CD4-positive, alpha-beta memory T cell (primary cell): ENCODE measurements at regions of chr19 and their contacts with region 1.

Region 1: DNA sequence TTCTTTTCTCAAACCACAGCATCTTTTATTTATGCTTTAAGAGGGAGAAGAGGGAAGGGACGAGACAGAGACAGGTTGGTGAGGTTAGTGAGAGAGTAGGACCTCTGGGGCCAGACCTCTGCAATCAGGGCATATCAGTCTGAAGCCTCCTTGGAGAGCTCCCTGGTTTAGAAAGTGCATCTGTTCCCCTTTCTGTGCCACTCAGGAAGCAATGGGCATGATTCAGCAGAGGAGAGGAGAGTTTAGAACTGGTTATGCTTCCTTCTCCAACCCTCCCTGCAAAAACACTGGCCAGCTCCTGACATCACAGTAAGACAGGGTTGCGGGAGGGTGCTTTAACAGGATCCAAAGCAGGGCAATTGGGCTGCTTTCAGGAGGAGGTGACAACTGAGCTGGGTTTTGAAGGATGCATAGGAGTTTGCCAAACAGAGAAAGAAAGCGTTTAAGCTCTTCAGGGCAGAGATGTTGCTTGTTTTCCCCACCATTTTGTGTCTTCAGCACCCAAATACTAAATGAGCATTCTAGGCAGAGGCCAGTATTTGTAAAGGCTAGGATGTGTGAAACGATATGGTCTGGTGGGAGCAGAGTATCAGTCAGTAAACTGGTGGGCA is 33.1 kb downstream of the CERS4 start:
- DNase-seq: no peak
- H3K4me3 ChIP-seq: no peak overlapping the region
- H3K4me3 Mint-ChIP-seq: no peak overlapping the region
- H3K27ac ChIP-seq: no peak overlapping the region
- H3K27ac Mint-ChIP-seq: peak overlapping the region in 2 of 7 donors; percentile 31 to 55
- H3K4me1 ChIP-seq: peaks cover 14% of the 10 kb centered on the region
- H3K4me1 Mint-ChIP-seq: peaks cover 10 to 19% (median 13%) of the 10 kb centered on the region in 4 donors
- H3K27me3 ChIP-seq: no peaks in the 10 kb centered on the region
- H3K27me3 Mint-ChIP-seq: no peaks in the 10 kb centered on the region

Region 2: DNA sequence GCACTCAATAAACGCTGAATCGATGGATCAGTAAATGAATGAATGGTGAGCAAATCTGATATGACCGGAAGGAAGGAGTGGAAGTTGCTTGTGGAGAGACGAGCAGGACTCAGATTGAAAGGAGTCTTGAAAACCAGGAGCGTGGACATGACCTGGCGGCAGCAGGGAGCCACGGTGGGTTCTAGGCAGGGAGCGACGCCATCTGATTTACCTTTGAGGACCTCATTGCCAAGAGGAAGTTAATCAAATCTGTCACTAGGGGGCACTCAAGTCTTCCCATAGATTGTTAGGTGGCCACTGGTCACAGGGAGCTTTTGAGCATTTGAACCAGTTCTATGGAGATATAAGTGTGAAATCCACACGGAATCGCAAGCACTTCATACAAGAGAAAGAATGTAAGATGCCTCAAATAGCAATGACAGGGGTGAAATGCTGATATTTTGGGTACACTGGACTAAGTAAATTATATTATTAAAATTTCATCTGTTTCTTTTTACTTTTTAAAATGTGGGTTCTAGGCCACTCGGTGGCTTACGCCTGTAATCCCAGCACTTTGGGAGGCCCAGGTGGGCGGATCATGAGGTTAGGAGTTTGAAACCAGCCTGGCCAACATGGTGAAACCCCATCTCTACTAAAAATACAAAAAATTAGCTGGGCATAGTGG is 83.8 kb before region 1 on chr19:
- CTCF ChIA-PET with region 1: interaction called, 10 read pairs
- POLR2A ChIA-PET with region 1: interaction called, 3 read pairs
- intact Hi-C with region 1: no loop called
- DNase-seq: peak; percentile 57 to 70 (median 67)
- H3K4me3 ChIP-seq: no peak overlapping the region
- H3K4me3 Mint-ChIP-seq: no peak overlapping the region
- H3K27ac ChIP-seq: no peak overlapping the region
- H3K27ac Mint-ChIP-seq: peak overlapping the region in 1 of 7 donors; percentile 87
- H3K4me1 ChIP-seq: no peaks in the 10 kb centered on the region
- H3K4me1 Mint-ChIP-seq: peaks cover 4 to 6% (median 4%) of the 10 kb centered on the region in 4 donors
- H3K27me3 ChIP-seq: no peaks in the 10 kb centered on the region
- H3K27me3 Mint-ChIP-seq: peaks cover 11 to 12% of the 10 kb centered on the region in 2 donors

Region 3: DNA sequence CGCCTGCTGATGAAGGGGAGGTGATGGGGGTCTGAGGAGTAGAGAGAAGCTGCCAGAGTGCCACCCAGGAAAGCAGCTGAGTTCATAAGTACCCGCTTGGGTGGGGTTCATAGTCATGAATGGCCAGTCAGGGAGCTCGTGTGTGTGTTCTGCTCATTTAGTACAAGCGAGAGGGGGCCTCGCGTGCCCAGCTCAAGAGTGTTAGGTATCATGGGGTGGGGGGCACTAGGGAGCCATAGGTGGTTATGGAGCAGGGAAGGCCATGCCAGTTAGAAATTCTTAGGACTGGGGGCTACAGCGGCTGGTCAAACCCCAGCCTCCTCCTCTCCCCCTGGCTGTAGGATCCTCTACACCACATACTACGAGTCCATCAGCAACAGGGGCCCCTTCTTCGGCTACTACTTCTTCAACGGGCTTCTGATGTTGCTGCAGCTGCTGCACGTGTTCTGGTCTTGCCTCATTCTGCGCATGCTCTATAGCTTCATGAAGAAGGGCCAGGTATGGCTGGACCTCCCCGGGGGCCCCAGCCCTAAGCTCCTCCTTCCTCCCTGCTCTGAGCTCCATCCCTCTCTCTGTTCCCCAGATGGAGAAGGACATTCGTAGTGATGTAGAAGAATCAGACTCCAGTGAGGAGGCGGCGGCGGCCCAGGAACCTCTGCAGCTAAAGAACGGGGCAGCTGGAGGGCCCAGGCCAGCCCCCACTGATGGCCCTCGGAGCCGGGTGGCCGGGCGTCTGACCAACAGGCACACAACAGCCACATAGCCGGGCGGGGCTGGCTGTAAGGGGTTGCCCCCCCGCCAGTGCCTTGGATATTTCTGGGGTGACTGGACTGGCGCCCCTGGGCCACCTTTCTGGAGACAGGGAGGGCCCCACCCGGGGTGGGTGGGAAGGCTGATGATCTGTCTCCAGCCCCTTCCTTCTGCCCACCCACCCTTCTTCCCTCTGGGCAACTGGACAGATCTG is 19.3 kb after region 1 on chr19:
- CTCF ChIA-PET with region 1: interaction called, 10 read pairs
- POLR2A ChIA-PET with region 1: no interaction called
- intact Hi-C with region 1: no loop called
- DNase-seq: no peak
- H3K4me3 ChIP-seq: no peak overlapping the region
- H3K4me3 Mint-ChIP-seq: no peak overlapping the region
- H3K27ac ChIP-seq: no peak overlapping the region
- H3K27ac Mint-ChIP-seq: no peak overlapping the region
- H3K4me1 ChIP-seq: peaks cover 6% of the 10 kb centered on the region
- H3K4me1 Mint-ChIP-seq: peaks cover 0 to 7% (median 1%) of the 10 kb centered on the region in 4 donors
- H3K27me3 ChIP-seq: no peaks in the 10 kb centered on the region
- H3K27me3 Mint-ChIP-seq: no peaks in the 10 kb centered on the region

Region 4: DNA sequence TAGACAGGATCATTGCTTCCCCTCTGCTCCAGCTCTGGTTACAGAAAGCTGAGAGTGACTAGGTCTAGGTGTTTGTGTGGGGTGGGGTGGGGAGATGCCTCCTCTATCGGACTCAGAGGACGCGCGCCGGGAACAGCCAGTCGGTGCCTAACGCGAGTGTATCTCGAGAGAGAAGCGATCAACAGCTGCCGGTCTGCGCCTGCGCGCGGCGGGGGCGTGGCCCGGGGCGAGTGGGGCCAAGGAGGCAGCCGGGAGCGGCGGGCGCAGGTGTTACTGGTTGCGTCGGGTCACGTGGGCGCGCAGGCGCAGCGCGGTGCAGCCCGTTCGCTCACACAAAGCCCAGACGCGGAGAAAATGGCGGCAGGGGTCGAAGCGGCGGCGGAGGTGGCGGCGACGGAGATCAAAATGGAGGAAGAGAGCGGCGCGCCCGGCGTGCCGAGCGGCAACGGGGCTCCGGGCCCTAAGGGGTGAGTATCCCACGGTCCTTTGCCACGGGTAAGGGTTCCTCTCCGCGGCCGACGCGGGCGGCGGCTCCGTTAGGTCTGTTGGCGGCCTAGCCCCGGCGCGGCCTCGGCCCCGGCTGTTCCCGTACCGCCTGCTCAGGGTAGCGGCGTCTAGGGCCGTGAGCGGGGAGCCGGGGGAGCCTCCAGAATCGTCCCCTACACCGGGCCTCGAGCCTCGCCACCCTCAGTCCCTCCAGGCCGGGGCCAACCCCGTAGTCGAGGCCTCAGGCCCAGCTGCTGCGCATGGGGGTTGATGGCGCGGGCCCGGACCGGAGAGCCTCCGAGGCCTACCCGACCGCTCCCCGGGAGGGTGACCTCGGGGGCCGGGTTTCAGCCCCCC is 202.6 kb after region 1 on chr19 and contains the start of gene HNRNPM:
- CTCF ChIA-PET with region 1: no interaction called
- POLR2A ChIA-PET with region 1: no interaction called
- intact Hi-C with region 1: no loop called
- DNase-seq: peak; percentile 99 to 100 (median 100)
- H3K4me3 ChIP-seq: peak within 1 kb of the TSS; percentile 26 to 85
- H3K4me3 Mint-ChIP-seq: peak within 1 kb of the TSS; percentile 95 to 99 (median 97)
- H3K27ac ChIP-seq: peak within 1 kb of the TSS; percentile 99
- H3K27ac Mint-ChIP-seq: peak within 1 kb of the TSS; percentile 91 to 99 (median 98)
- H3K4me1 ChIP-seq: peaks cover 40% of the 10 kb centered on the region
- H3K4me1 Mint-ChIP-seq: peaks cover 28 to 51% (median 36%) of the 10 kb centered on the region in 4 donors
- H3K27me3 ChIP-seq: no peaks in the 10 kb centered on the region
- H3K27me3 Mint-ChIP-seq: no peaks in the 10 kb centered on the region
- total RNA-seq, gene HNRNPM: 197 to 199 TPM